HCT116 (cell line): ENCODE measurements at regions of chr11 and their contacts with region 1.

Region 1: DNA sequence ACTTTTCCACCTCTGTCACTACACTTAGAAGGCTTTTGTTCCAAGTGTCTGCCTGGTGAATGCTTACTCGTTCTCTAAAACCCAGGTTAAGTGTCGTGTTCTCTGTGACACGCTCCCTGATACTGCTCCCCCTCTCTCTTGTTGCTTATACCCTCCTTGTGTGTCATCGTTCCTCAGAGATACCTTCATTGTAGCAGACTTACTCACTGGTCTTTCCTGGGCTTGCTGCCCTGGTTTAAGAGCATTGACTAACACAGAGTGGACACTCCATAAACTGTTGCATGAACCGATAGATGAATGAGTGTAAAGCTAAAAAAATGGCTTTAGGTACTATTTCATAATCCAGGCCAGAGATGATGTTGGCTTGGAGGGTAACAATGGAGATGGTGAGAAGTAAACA is 171.3 kb downstream of the GRIK4 start:
- DNase-seq: no peak
- ATAC-seq: no peak
- H3K4me3 ChIP-seq: no peak overlapping the region
- H3K27ac ChIP-seq: no peak overlapping the region
- H3K4me1 ChIP-seq: no peaks in the 10 kb centered on the region
- H3K27me3 ChIP-seq: no peaks in the 10 kb centered on the region; the same call in 1 of the 2 replicates
- CTCF ChIP-seq: no peak
- POLR2A ChIP-seq: no peak
- RAD21 ChIP-seq: no peak

Region 2: GRCh38 chr11:120335908-120336640 is 346.8 kb before region 1 on chr11 and contains the start of gene ARHGEF12:
- CTCF ChIA-PET with region 1: no interaction called
- POLR2A ChIA-PET with region 1: no interaction called
- RAD21 ChIA-PET with region 1: no interaction called
- intact Hi-C with region 1: loop called (anchors 10 kb)
- DNase-seq: peak; percentile 93
- ATAC-seq: peak; percentile 77
- H3K4me3 ChIP-seq: peak within 1 kb of the TSS; percentile 77 to 87
- H3K27ac ChIP-seq: peak within 1 kb of the TSS; percentile 91
- H3K4me1 ChIP-seq: peaks cover 58 to 76% of the 10 kb centered on the region in 2 experiments
- H3K27me3 ChIP-seq: no peaks in the 10 kb centered on the region
- CTCF ChIP-seq: peak; percentile 21 to 51 (median 49); a peak in 4 of 6 replicates
- POLR2A ChIP-seq: peak; percentile 60
- RAD21 ChIP-seq: peak; percentile 43
- total RNA-seq, gene ARHGEF12: 81.4 TPM

Region 3: DNA sequence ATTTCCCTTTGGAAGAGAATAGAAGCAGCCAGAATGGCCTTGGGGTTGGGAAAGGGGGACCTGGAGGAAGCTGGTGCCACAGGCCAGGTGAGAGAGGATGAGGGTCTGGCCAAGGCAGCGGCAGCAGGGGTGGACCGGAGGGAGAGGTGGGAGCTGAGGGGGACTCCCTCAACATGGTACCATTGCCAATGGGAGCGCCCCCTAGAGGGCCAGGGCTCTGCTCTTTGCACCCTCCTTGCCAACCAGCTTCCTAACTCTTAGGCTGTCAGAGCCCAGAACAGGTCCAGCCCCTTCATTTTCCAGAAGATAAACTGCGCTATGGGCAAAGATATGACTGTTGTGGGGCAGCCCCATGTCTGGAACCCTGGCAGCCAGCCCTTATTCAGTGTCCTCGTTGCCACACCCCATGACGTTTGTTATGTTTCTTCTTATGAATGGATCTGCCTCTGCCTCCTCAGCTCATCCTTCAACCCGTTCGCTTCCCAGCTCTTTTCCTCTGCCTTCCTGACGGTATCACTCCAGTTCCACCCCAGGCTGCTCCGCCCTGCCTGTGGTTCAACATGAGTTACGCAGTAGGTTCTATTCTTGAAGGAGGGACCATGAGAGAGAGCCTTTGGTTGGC is 13.8 kb after region 1 on chr11:
- CTCF ChIA-PET with region 1: interaction called, 14 read pairs
- POLR2A ChIA-PET with region 1: no interaction called
- RAD21 ChIA-PET with region 1: no interaction called
- intact Hi-C with region 1: no loop called
- DNase-seq: no peak
- ATAC-seq: peak; percentile 44; the same call in 1 of the 2 replicates
- H3K4me3 ChIP-seq: no peak overlapping the region
- H3K27ac ChIP-seq: no peak overlapping the region
- H3K4me1 ChIP-seq: no peaks in the 10 kb centered on the region
- H3K27me3 ChIP-seq: 0 out of 2 replicates have a peak, but pooled peaks cover under 1% of the 10 kb centered on the region
- CTCF ChIP-seq: peak in 2 of 3 experiments; percentile 45 to 50; a peak in 4 of 6 replicates
- POLR2A ChIP-seq: no peak
- RAD21 ChIP-seq: no peak

Region 4: DNA sequence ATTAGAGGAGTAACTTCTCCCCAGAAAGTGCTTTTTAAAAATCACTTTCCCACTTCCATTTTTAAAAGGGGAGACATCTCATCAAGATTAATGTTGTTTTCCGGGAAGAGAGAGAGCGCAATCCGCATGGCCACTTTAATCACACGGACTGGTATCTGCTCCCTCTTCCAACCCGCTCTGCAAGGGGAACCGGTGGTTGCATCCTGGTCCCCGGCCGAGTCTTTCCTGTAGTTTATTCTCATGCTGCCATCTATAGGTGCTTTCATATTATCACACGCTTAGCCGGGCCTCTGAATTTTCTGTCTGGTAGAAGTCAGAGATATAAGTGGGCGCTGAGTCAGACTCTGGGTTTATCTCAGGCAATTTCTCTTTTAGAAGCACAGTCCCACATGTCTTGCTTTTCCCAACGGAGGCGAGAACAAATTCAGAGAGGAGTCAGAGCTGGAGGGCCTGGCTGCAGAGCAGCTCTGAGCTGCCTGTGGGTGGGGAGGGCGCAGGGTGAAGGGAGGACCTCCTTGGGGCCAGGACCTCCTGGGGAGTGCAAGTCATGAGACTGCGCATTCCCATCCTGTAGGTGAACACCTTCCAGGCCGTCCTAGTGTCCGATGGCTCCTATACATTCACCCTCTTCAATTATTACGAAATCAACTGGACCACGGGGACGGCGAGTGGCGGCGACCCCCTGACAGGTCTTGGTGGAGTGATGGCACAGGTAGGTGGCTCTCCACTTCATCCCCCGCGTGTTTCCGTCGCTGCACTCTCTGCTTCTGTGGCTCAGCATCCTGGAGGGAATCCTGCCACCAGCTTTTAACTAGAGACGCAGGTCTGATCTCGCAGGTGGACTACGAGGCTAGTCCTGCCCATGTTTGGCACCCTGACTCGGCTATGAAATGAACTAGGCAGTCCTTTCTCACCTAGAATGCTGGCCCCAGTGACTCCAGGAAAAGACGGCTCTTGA is 429.9 kb after region 1 on chr11:
- CTCF ChIA-PET with region 1: no interaction called
- POLR2A ChIA-PET with region 1: no interaction called
- RAD21 ChIA-PET with region 1: no interaction called
- intact Hi-C with region 1: loop called (anchors 10 kb)
- DNase-seq: peak; percentile 35
- ATAC-seq: peak; percentile 98
- H3K4me3 ChIP-seq: no peak overlapping the region
- H3K27ac ChIP-seq: no peak overlapping the region
- H3K4me1 ChIP-seq: 0 out of 4 replicates have a peak, but pooled peaks cover 0 to 3% of the 10 kb centered on the region in 2 experiments
- H3K27me3 ChIP-seq: peaks cover 8% of the 10 kb centered on the region; the same call in 1 of the 2 replicates
- CTCF ChIP-seq: peak; percentile 43 to 70 (median 67)
- POLR2A ChIP-seq: no peak
- RAD21 ChIP-seq: peak; percentile 81